Endothelial cell of umbilical vein (primary cell): ENCODE measurements at regions of chr2 and their contacts with region 1.

Region 1: DNA sequence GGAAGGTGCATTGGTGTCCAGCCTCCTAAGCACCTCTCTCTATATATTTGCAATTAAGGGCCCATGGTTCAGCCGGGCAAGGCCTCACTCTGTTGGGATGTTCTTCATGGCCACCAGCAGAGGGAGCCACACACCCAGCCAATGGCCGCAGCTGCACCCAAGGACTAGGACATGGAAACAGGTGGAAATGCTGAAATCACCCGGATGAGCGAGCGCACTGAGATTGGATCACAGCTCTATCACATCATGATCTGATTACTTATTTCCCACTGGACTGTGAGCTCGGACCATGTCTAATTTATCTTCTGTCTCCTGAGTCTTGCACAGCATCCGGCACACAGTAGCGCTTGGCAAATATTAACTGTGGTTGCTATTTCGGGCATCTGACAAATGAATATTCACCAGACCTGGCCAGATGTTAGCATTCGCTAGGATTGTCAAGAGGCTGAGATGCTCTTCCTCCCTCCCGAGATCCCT is 31.2 kb downstream of the KIF3C start:
- DNase-seq: peak; percentile 86
- H3K4me3 ChIP-seq: no peak overlapping the region
- H3K27ac ChIP-seq: no peak overlapping the region
- H3K4me1 ChIP-seq: no peaks in the 10 kb centered on the region
- H3K27me3 ChIP-seq: no peaks in the 10 kb centered on the region
- CTCF ChIP-seq: peak; percentile 88 to 95
- POLR2A ChIP-seq: no peak

Region 2: GRCh38 chr2:25982273-25982967 is 31.3 kb after region 1 on chr2 and contains the start of gene KIF3C:
- CTCF ChIA-PET with region 1: interaction called, 15 read pairs
- POLR2A ChIA-PET with region 1: no interaction called
- dilution Hi-C with region 1: no loop called
- intact Hi-C with region 1: loop called (anchors 1 kb)
- DNase-seq: peak; percentile 69
- H3K4me3 ChIP-seq: peak within 1 kb of the TSS; percentile 74 to 96 (median 86)
- H3K27ac ChIP-seq: no peak within 1 kb of the TSS
- H3K4me1 ChIP-seq: peaks cover 37% of the 10 kb centered on the region
- H3K27me3 ChIP-seq: no peaks in the 10 kb centered on the region
- CTCF ChIP-seq: no peak
- POLR2A ChIP-seq: peak; percentile 60
- total RNA-seq, gene KIF3C: 40.7 and 42.1 TPM in 2 replicates

Region 3: GRCh38 chr2:26068602-26069298 is 117.6 kb after region 1 on chr2:
- CTCF ChIA-PET with region 1: no interaction called
- POLR2A ChIA-PET with region 1: no interaction called
- dilution Hi-C with region 1: no loop called
- intact Hi-C with region 1: loop called (anchors 5 kb)
- DNase-seq: peak; percentile 86
- H3K4me3 ChIP-seq: no peak overlapping the region
- H3K27ac ChIP-seq: peak overlapping the region; percentile 57
- H3K4me1 ChIP-seq: peaks cover 20% of the 10 kb centered on the region
- H3K27me3 ChIP-seq: no peaks in the 10 kb centered on the region
- CTCF ChIP-seq: no peak
- POLR2A ChIP-seq: no peak

Region 4: GRCh38 chr2:26144953-26145680 is 194.0 kb after region 1 on chr2:
- CTCF ChIA-PET with region 1: interaction called, 24 read pairs
- POLR2A ChIA-PET with region 1: no interaction called
- dilution Hi-C with region 1: no loop called
- intact Hi-C with region 1: loop called (anchors 1 kb)
- DNase-seq: peak; percentile 74
- H3K4me3 ChIP-seq: no peak overlapping the region
- H3K27ac ChIP-seq: no peak overlapping the region
- H3K4me1 ChIP-seq: peaks cover 11% of the 10 kb centered on the region
- H3K27me3 ChIP-seq: peaks cover 0 to 2% of the 10 kb centered on the region in 2 experiments
- CTCF ChIP-seq: peak; percentile 59 to 61
- POLR2A ChIP-seq: no peak

Region 5: DNA sequence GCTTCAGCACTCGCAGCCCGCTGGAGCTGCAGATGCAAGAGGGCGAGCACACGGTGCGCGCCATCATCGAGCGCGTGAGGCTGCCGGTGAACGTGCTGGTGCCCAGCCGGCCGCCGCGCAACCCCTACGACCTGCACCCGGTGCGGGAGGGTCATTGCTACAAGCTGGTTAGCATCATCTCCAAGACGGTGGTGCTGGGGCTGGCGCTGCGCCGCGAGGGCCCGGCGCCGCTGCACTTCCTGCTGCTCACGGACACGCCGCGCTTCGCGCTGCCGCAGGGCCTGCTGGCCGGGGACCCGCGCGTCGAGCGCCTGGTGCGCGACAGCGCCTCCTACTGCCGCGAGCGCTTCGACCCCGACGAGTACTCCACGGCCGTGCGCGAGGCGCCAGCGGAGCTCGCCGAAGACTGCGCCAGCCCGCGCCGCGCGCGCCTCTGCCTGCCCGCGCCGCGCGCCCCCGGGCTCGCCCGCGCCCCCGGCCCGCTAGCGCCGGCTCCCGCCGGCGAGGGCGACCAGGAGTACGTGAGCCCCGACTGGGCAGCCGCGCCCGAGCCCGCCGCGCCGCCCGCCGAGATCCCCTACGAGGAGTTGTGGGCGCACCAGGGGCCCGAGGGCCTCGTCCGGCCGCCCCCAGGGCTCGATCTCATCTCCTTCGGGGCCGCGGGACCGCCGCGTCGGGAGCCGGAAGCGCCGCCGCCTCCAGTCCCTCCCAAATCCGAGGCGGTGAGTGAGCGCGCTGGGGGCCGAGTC is 233.6 kb after region 1 on chr2:
- CTCF ChIA-PET with region 1: interaction called, 11 read pairs
- POLR2A ChIA-PET with region 1: no interaction called
- dilution Hi-C with region 1: no loop called
- intact Hi-C with region 1: no loop called
- DNase-seq: peak; percentile 86
- H3K4me3 ChIP-seq: peak overlapping the region; percentile 50 to 52 (median 51)
- H3K27ac ChIP-seq: no peak overlapping the region
- H3K4me1 ChIP-seq: peaks cover 3% of the 10 kb centered on the region
- H3K27me3 ChIP-seq: no peaks in the 10 kb centered on the region
- CTCF ChIP-seq: peak; percentile 70 to 84
- POLR2A ChIP-seq: peak; percentile 53

Region 6: GRCh38 chr2:26330113-26330549 is 379.0 kb after region 1 on chr2:
- CTCF ChIA-PET with region 1: interaction called, 4 read pairs
- POLR2A ChIA-PET with region 1: no interaction called
- dilution Hi-C with region 1: no loop called
- intact Hi-C with region 1: loop called (anchors 1 kb)
- DNase-seq: peak; percentile 81
- H3K4me3 ChIP-seq: no peak overlapping the region
- H3K27ac ChIP-seq: no peak overlapping the region
- H3K4me1 ChIP-seq: no peaks in the 10 kb centered on the region
- H3K27me3 ChIP-seq: peaks cover 4 to 9% of the 10 kb centered on the region in 2 experiments
- CTCF ChIP-seq: peak; percentile 83 to 90
- POLR2A ChIP-seq: no peak